B cell (primary cell): ENCODE measurements at regions of chr17 and their contacts with region 1.

Region 1: DNA sequence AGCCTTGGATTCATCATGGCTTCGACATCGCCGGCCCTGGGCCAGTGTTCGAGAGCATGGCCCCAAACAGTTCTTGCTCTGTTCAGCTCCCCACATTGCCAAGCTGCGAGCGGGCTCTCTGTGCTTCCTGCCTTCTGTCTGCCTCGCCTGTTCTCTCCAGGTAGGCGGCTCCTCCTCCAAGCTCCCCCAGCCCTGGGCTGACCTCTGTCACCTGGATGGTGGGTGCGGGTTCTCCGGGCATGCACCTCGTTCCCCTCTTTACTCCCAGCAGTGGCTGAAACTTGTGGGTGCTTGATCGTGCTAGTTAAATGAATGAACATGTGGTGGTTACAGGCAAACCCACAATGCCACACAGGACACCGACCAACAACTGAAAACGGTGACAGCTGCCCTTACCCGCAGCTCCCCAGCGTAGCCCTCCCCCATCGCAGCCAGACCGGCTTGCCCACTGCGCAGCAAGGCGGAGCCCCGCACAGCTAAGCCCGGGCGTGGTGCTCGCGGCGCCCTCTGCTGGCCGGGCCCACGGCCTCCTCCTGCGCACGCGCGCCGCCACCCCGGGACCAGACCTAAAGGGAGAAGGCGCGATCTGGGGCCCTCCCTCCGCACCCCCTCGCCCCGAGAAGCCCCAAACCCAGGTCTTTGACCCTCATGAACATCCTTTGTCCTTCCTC is 23.0 kb upstream of the EIF1 start:
- DNase-seq: peak; percentile 96
- ATAC-seq: peak; percentile 72
- H3K4me3 ChIP-seq: peak overlapping the region; percentile 30 to 89 (median 62)
- H3K4me3 Mint-ChIP-seq: peak overlapping the region; percentile 94
- H3K27ac ChIP-seq: peak overlapping the region; percentile 99
- H3K27ac Mint-ChIP-seq: peak overlapping the region; percentile 99
- H3K4me1 ChIP-seq: peaks cover 12 to 41% of the 10 kb centered on the region in 2 donors
- H3K4me1 Mint-ChIP-seq: peaks cover 38% of the 10 kb centered on the region
- H3K27me3 ChIP-seq: no peaks in the 10 kb centered on the region
- H3K27me3 Mint-ChIP-seq: no peaks in the 10 kb centered on the region
- CTCF ChIP-seq: peak; percentile 96

Region 2: DNA sequence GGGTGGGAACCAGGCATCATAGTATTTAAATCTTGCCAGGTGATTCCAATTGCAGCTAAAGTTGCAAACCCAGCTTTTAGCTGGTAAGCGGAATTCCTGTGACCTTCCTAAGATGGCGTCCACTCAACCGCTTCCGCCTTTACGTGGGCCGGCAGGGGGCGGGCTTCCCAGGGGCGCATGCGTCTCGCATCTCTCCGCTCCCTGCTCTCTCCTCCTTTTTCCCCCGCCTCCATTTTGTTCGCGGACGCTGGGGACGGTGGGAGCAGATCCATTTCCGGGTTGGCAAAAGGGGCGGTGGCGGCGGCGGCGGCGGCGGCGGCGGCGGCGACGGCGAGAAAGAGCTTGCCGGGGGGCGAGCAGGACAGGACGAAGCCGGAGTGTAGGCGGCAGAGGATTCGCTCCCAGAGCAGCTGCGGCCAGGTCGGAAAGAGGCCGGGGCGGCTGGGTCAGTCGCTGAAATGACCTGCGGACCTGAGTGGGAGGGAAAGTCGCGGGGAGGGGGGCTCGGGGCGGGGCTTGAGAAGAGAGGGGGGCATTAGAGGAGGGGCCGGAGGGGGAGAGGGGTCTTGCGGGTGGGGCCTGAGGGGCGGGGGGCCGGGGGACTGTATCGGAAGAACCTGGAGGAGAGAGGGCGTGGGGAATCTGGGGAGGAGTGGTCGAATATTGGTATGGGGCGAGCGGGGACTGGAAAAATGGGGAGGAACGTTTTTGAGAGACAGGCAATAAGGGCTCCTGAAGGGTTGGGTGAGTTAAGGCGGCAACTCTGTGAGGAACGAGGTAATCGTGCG is 1446.4 kb before region 1 on chr17 and contains the start of gene WIPF2:
- CTCF ChIA-PET with region 1: no interaction called
- POLR2A ChIA-PET with region 1: no interaction called
- intact Hi-C with region 1: loop called (anchors 5 kb)
- DNase-seq: peak; percentile 97
- ATAC-seq: peak; percentile 86
- H3K4me3 ChIP-seq: peak within 1 kb of the TSS; percentile 57 to 94 (median 82)
- H3K4me3 Mint-ChIP-seq: peak within 1 kb of the TSS; percentile 93
- H3K27ac ChIP-seq: peak within 1 kb of the TSS; percentile 92 to 100
- H3K27ac Mint-ChIP-seq: peak within 1 kb of the TSS; percentile 99
- H3K4me1 ChIP-seq: peaks cover 12 to 21% of the 10 kb centered on the region in 2 donors
- H3K4me1 Mint-ChIP-seq: peaks cover 36% of the 10 kb centered on the region
- H3K27me3 ChIP-seq: no peaks in the 10 kb centered on the region
- H3K27me3 Mint-ChIP-seq: no peaks in the 10 kb centered on the region
- CTCF ChIP-seq: peak; percentile 71
- total RNA-seq, gene WIPF2: 46.6 and 48.4 TPM in 2 replicates

Region 3: GRCh38 chr17:40803617-40804082 is 862.1 kb before region 1 on chr17:
- CTCF ChIA-PET with region 1: interaction called, 22 read pairs
- POLR2A ChIA-PET with region 1: no interaction called
- intact Hi-C with region 1: loop called (anchors 1 kb)
- DNase-seq: peak; percentile 79
- ATAC-seq: peak; percentile 93
- H3K4me3 ChIP-seq: no peak overlapping the region
- H3K4me3 Mint-ChIP-seq: no peak overlapping the region
- H3K27ac ChIP-seq: no peak overlapping the region
- H3K27ac Mint-ChIP-seq: no peak overlapping the region
- H3K4me1 ChIP-seq: peaks cover 0 to 4% of the 10 kb centered on the region in 2 donors
- H3K4me1 Mint-ChIP-seq: peaks cover 3% of the 10 kb centered on the region
- H3K27me3 ChIP-seq: peaks cover 0 to 47% (median 28%) of the 10 kb centered on the region in 4 experiments
- H3K27me3 Mint-ChIP-seq: peaks cover 48% of the 10 kb centered on the region
- CTCF ChIP-seq: peak; percentile 94

Region 4: DNA sequence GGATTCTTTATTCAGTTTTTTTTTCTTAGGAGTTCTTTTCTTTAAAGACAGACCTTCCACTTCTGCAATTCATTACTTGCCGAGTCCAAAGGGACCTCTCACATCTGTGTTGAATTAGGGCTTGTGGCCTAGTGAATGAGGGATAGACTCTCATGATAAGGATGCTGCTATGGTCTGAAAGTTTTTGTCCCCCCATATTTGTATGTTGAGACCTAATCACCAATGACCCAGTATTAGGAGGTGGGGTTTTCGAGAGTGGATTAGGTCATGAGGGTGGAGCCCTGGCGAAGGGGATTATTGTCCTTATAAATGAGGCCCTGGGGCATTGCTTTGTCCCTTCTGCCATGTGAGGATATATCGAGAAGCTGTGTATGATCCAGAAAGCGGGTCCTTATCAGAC is 808.2 kb before region 1 on chr17:
- CTCF ChIA-PET with region 1: interaction called, 18 read pairs
- POLR2A ChIA-PET with region 1: no interaction called
- intact Hi-C with region 1: loop called (anchors 1 kb)
- DNase-seq: no peak
- ATAC-seq: no peak
- H3K4me3 ChIP-seq: no peak overlapping the region
- H3K4me3 Mint-ChIP-seq: no peak overlapping the region
- H3K27ac ChIP-seq: no peak overlapping the region
- H3K27ac Mint-ChIP-seq: no peak overlapping the region
- H3K4me1 ChIP-seq: no peaks in the 10 kb centered on the region
- H3K4me1 Mint-ChIP-seq: no peaks in the 10 kb centered on the region
- H3K27me3 ChIP-seq: peaks cover 0 to 8% (median 0%) of the 10 kb centered on the region in 4 experiments
- H3K27me3 Mint-ChIP-seq: peaks cover 48% of the 10 kb centered on the region
- CTCF ChIP-seq: no peak

Region 5: DNA sequence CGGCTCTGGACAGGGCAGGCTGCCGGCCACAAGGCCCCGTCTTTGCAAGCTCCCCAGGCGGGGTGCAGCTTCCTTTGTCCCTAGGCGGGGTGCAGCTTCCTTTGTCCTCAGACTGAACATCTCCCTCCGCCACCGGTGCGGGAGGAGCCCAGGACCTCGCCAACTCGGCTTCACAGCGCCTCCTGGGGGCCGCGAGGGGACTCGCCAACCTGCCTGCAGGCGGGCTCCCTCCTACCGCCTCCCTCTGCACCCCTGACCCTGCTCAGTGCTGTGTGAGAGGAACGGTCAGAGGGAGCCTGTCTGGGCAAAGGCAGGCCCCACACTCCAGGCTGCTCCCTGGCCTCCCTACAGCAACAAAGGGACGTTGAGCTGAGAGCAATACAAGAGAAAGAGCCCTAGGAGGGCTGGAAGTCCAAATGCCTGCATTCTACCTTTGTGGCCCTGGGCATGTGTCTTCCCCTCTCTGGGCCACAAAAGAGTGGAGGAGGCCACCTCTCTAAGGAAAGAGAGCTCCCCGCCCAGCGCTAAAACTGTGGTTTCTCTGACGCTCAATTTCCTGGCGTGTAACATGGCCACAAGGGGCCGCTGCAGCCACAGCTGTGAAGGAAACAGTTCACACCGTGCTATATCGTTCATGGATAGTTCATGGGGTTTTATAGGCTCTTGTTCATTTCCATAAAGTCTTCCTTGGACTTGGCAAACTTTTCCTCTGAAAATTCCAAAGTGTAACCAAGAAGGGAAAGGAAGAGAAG is 116.7 kb before region 1 on chr17:
- CTCF ChIA-PET with region 1: interaction called, 50 read pairs
- POLR2A ChIA-PET with region 1: no interaction called
- intact Hi-C with region 1: loop called (anchors 1 kb)
- DNase-seq: peak; percentile 78
- ATAC-seq: peak; percentile 80
- H3K4me3 ChIP-seq: peak overlapping the region in 2 of 5 experiments; percentile 5 to 15
- H3K4me3 Mint-ChIP-seq: peak overlapping the region; percentile 37
- H3K27ac ChIP-seq: no peak overlapping the region
- H3K27ac Mint-ChIP-seq: no peak overlapping the region
- H3K4me1 ChIP-seq: peaks cover 8 to 13% of the 10 kb centered on the region in 2 donors
- H3K4me1 Mint-ChIP-seq: peaks cover 8% of the 10 kb centered on the region
- H3K27me3 ChIP-seq: peaks cover 0 to 42% (median 7%) of the 10 kb centered on the region in 4 experiments
- H3K27me3 Mint-ChIP-seq: peaks cover 53% of the 10 kb centered on the region
- CTCF ChIP-seq: peak; percentile 93

Region 6: DNA sequence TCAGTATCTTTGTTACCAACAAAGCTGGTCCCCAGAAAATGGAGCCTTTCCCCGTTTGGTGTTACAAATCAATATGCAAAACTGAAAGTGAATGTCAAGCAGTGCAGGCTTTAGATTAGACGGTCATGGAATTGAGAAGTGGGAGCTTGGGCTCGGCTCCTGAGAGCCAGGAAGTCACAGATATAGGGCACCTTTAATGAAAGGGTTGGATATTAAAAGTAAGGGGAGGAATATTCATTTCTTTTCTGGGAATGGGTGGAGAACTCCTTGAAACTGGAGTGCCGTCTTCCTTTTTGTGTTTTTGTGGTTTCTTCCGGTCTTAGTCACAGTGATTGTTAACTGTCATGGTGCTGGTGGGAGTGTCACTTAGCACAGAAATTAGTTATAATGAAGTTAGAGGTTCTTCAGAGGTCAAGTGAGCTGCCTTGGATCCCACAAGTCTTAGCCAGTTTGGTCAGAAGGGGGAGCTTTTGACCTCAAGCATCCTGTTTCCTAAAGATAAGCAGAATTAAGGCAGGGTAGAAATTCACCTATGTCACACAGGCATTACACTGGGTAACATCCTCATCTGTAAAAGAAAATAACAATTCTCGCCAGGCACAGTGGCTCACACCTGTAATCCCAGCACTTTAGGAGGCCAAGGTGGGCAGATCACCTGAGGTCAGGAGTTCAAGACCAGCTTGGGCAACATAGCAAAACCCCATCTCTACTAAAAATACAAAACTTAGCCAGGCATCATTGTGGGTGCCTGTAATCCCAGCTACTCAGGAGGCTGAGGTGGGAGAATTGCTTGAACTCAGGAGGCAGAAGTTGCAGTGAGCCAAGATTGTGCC is 13.4 kb after region 1 on chr17:
- CTCF ChIA-PET with region 1: interaction called, 64 read pairs
- POLR2A ChIA-PET with region 1: interaction called, 16 read pairs
- intact Hi-C with region 1: loop called (anchors 1 kb)
- DNase-seq: peak; percentile 65
- ATAC-seq: peak; percentile 50
- H3K4me3 ChIP-seq: peak overlapping the region; percentile 17 to 51 (median 46)
- H3K4me3 Mint-ChIP-seq: peak overlapping the region; percentile 82
- H3K27ac ChIP-seq: peak overlapping the region; percentile 62 to 66
- H3K27ac Mint-ChIP-seq: peak overlapping the region; percentile 87
- H3K4me1 ChIP-seq: peaks cover 46 to 50% of the 10 kb centered on the region in 2 donors
- H3K4me1 Mint-ChIP-seq: peaks cover 37% of the 10 kb centered on the region
- H3K27me3 ChIP-seq: no peaks in the 10 kb centered on the region
- H3K27me3 Mint-ChIP-seq: no peaks in the 10 kb centered on the region
- CTCF ChIP-seq: no peak

Region 7: GRCh38 chr17:41695954-41696756 is 30.5 kb after region 1 on chr17:
- CTCF ChIA-PET with region 1: interaction called, 212 read pairs
- POLR2A ChIA-PET with region 1: interaction called, 117 read pairs
- intact Hi-C with region 1: no loop called
- DNase-seq: peak; percentile 82
- ATAC-seq: peak; percentile 72
- H3K4me3 ChIP-seq: no peak overlapping the region
- H3K4me3 Mint-ChIP-seq: no peak overlapping the region
- H3K27ac ChIP-seq: no peak overlapping the region
- H3K27ac Mint-ChIP-seq: peak overlapping the region; percentile 42
- H3K4me1 ChIP-seq: peaks cover under 1 to 7% of the 10 kb centered on the region in 2 donors
- H3K4me1 Mint-ChIP-seq: peaks cover 29% of the 10 kb centered on the region
- H3K27me3 ChIP-seq: no peaks in the 10 kb centered on the region
- H3K27me3 Mint-ChIP-seq: peaks cover 2% of the 10 kb centered on the region
- CTCF ChIP-seq: peak; percentile 82